ENCODE measurements at regions of chr7 and their contacts with region 1.

Region 1: GRCh38 chr7:130096243-130096827 is 26.0 kb downstream of the KLHDC10 start:
- DNase-seq: no peak
- ATAC-seq: no peak
- H3K4me3 ChIP-seq: no peak overlapping the region
- H3K4me3 Mint-ChIP-seq: no peak overlapping the region
- H3K27ac ChIP-seq: no peak overlapping the region
- H3K27ac Mint-ChIP-seq: no peak overlapping the region
- H3K4me1 ChIP-seq: no peaks in the 10 kb centered on the region
- H3K4me1 Mint-ChIP-seq: peaks cover 5 to 18% (median 18%) of the 10 kb centered on the region in 3 donors
- H3K27me3 ChIP-seq: no peaks in the 10 kb centered on the region
- H3K27me3 Mint-ChIP-seq: no peaks in the 10 kb centered on the region

Region 2: GRCh38 chr7:130649004-130649790 is 552.9 kb after region 1 on chr7:
- CTCF ChIA-PET with region 1: no interaction called
- POLR2A ChIA-PET with region 1: interaction called in 1 of 2 experiments, 15 read pairs
- DNase-seq: no peak
- ATAC-seq: no peak
- H3K4me3 ChIP-seq: no peak overlapping the region
- H3K4me3 Mint-ChIP-seq: no peak overlapping the region
- H3K27ac ChIP-seq: no peak overlapping the region
- H3K27ac Mint-ChIP-seq: no peak overlapping the region
- H3K4me1 ChIP-seq: no peaks in the 10 kb centered on the region
- H3K4me1 Mint-ChIP-seq: peaks cover 0 to 3% (median 0%) of the 10 kb centered on the region in 3 donors
- H3K27me3 ChIP-seq: no peaks in the 10 kb centered on the region
- H3K27me3 Mint-ChIP-seq: no peaks in the 10 kb centered on the region